Activated CD4-positive, alpha-beta memory T cell treated with anti-CD3 and anti-CD28 coated beads, Interleukin-2, amount 10 ng/mL, durations not matched to agents 7 days and 5 days (primary cell): ENCODE measurements at regions of chr5 and their contacts with region 1.

Region 1: GRCh38 chr5:130871346-130872086 is 293.5 kb downstream of the HINT1 start:
- DNase-seq: peak; percentile 28
- H3K4me3 Mint-ChIP-seq: no peak overlapping the region
- H3K27ac Mint-ChIP-seq: no peak overlapping the region
- H3K4me1 Mint-ChIP-seq: no peaks in the 10 kb centered on the region
- H3K27me3 Mint-ChIP-seq: no peaks in the 10 kb centered on the region

Region 2: GRCh38 chr5:130978475-130978874 is 107.0 kb after region 1 on chr5:
- CTCF ChIA-PET with region 1: no interaction called
- POLR2A ChIA-PET with region 1: no interaction called
- DNase-seq: no peak
- H3K4me3 Mint-ChIP-seq: no peak overlapping the region
- H3K27ac Mint-ChIP-seq: no peak overlapping the region
- H3K4me1 Mint-ChIP-seq: no peaks in the 10 kb centered on the region
- H3K27me3 Mint-ChIP-seq: peaks cover 9% of the 10 kb centered on the region

Region 3: GRCh38 chr5:131109540-131110255 is 238.2 kb after region 1 on chr5:
- CTCF ChIA-PET with region 1: interaction called, 27 read pairs
- POLR2A ChIA-PET with region 1: no interaction called
- DNase-seq: peak; percentile 22
- H3K4me3 Mint-ChIP-seq: no peak overlapping the region
- H3K27ac Mint-ChIP-seq: no peak overlapping the region
- H3K4me1 Mint-ChIP-seq: peaks cover 2% of the 10 kb centered on the region
- H3K27me3 Mint-ChIP-seq: no peaks in the 10 kb centered on the region

Region 4: GRCh38 chr5:131417240-131417869 is 545.8 kb after region 1 on chr5:
- CTCF ChIA-PET with region 1: interaction called, 10 read pairs
- POLR2A ChIA-PET with region 1: no interaction called
- DNase-seq: peak; percentile 82
- H3K4me3 Mint-ChIP-seq: no peak overlapping the region
- H3K27ac Mint-ChIP-seq: peak overlapping the region; percentile 13
- H3K4me1 Mint-ChIP-seq: peaks cover 41% of the 10 kb centered on the region
- H3K27me3 Mint-ChIP-seq: no peaks in the 10 kb centered on the region